ENCODE measurements at regions of chr2 and their contacts with region 1.

Region 1: GRCh38 chr2:70887550-70888246 is 48.0 kb upstream of the ATP6V1B1 start:
- DNase-seq: no peak
- H3K4me3 Mint-ChIP-seq: peak overlapping the region; percentile 66
- H3K27ac Mint-ChIP-seq: no peak overlapping the region
- H3K4me1 Mint-ChIP-seq: peaks cover 20% of the 10 kb centered on the region
- H3K27me3 Mint-ChIP-seq: peaks cover 84% of the 10 kb centered on the region

Region 2: GRCh38 chr2:70340921-70341765 is 546.6 kb before region 1 on chr2:
- intact Hi-C with region 1: no loop called
- DNase-seq: peak; percentile 13
- H3K4me3 Mint-ChIP-seq: no peak overlapping the region
- H3K27ac Mint-ChIP-seq: no peak overlapping the region
- H3K4me1 Mint-ChIP-seq: no peaks in the 10 kb centered on the region
- H3K27me3 Mint-ChIP-seq: peaks cover 15% of the 10 kb centered on the region

Region 3: GRCh38 chr2:70898363-70899240 is 10.9 kb after region 1 on chr2:
- intact Hi-C with region 1: loop called (anchors 1 kb)
- DNase-seq: no peak
- H3K4me3 Mint-ChIP-seq: no peak overlapping the region
- H3K27ac Mint-ChIP-seq: no peak overlapping the region
- H3K4me1 Mint-ChIP-seq: peaks cover 8% of the 10 kb centered on the region
- H3K27me3 Mint-ChIP-seq: peaks cover 90% of the 10 kb centered on the region

Region 4: GRCh38 chr2:70907130-70908057 is 19.7 kb after region 1 on chr2:
- intact Hi-C with region 1: loop called (anchors 2 kb)
- DNase-seq: no peak
- H3K4me3 Mint-ChIP-seq: peak overlapping the region; percentile 47
- H3K27ac Mint-ChIP-seq: no peak overlapping the region
- H3K4me1 Mint-ChIP-seq: peaks cover 8% of the 10 kb centered on the region
- H3K27me3 Mint-ChIP-seq: peaks cover 77% of the 10 kb centered on the region

Region 5: GRCh38 chr2:70984576-70985282 is 97.0 kb after region 1 on chr2:
- intact Hi-C with region 1: no loop called
- DNase-seq: peak; percentile 75
- H3K4me3 Mint-ChIP-seq: no peak overlapping the region
- H3K27ac Mint-ChIP-seq: no peak overlapping the region
- H3K4me1 Mint-ChIP-seq: peaks cover 7% of the 10 kb centered on the region
- H3K27me3 Mint-ChIP-seq: no peaks in the 10 kb centered on the region

Measured in activated T-helper 2 cell treated with anti-CD3 and anti-CD28 coated beads, Interferon-gamma antibody, Interleukin-2, Interleukin-4, amounts not matched to agents 10 μg/mL and 5 μg/mL and 100 μg/mL, durations not matched to agents 14 hours and 24 hours and 36 hours (primary cell).